Psoas muscle (tissue), 8 donors: ENCODE measurements at regions of chr3 and their contacts with region 1.

Region 1: DNA sequence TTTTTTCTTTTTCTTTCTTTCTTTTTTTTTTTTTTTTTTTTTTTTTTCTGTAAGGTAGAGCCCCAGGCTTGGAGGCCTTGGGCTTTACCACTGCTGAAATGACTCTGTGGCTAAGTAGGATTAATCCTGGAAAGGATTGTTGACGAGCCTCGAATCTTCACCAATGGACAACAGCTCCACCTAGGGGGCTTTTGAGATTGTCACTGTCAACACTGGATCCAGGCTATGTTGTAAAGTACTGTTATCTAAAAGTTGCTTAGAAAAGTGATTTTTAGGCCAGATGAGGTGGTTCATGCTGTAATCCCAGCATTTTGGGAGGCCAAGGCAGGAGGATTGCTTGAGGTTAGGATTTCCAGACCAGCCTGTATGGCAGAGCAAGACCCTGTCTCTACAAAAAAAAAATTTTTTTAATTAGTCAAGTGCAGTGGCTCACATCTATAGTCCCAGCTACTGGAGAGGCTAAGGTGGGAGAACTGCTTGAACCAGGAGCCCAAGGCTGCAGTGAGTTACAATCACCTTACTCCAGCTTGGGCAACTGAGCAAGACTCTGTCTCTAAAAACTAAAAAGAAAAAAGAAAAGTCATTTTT is 41.6 kb downstream of the KLHL18 start:
- DNase-seq: peak in 1 of 2 donors; percentile 23
- ATAC-seq: peak; percentile 94 to 98 (median 97)
- H3K4me3 ChIP-seq: no peak overlapping the region
- H3K27ac ChIP-seq: no peak overlapping the region
- H3K4me1 ChIP-seq: no peaks in the 10 kb centered on the region
- H3K27me3 ChIP-seq: no peaks in the 10 kb centered on the region
- CTCF ChIP-seq: peak; percentile 72

Region 2: GRCh38 chr3:46705022-46705530 is 619.3 kb before region 1 on chr3:
- intact Hi-C with region 1: loop called (anchors 10 kb)
- DNase-seq: peak; percentile 68 to 86
- ATAC-seq: peak; percentile 80 to 87 (median 84)
- H3K4me3 ChIP-seq: no peak overlapping the region
- H3K27ac ChIP-seq: no peak overlapping the region
- H3K4me1 ChIP-seq: peaks cover 35% of the 10 kb centered on the region
- H3K27me3 ChIP-seq: no peaks in the 10 kb centered on the region
- CTCF ChIP-seq: peak; percentile 98

Region 3: GRCh38 chr3:46923559-46924350 is 400.6 kb before region 1 on chr3:
- intact Hi-C with region 1: loop called in 1 of 2 experiments (anchors 10 kb)
- DNase-seq: peak in 1 of 2 donors; percentile 70
- ATAC-seq: peak in 2 of 4 donors; percentile 30 to 58
- H3K4me3 ChIP-seq: no peak overlapping the region
- H3K27ac ChIP-seq: no peak overlapping the region
- H3K4me1 ChIP-seq: peaks cover 53% of the 10 kb centered on the region
- H3K27me3 ChIP-seq: no peaks in the 10 kb centered on the region
- CTCF ChIP-seq: peak; percentile 66

Region 4: GRCh38 chr3:47113669-47114365 is 210.6 kb before region 1 on chr3:
- intact Hi-C with region 1: no loop called
- DNase-seq: no peak
- ATAC-seq: no peak
- H3K4me3 ChIP-seq: no peak overlapping the region
- H3K27ac ChIP-seq: no peak overlapping the region
- H3K4me1 ChIP-seq: no peaks in the 10 kb centered on the region
- H3K27me3 ChIP-seq: no peaks in the 10 kb centered on the region
- CTCF ChIP-seq: no peak

Region 5: DNA sequence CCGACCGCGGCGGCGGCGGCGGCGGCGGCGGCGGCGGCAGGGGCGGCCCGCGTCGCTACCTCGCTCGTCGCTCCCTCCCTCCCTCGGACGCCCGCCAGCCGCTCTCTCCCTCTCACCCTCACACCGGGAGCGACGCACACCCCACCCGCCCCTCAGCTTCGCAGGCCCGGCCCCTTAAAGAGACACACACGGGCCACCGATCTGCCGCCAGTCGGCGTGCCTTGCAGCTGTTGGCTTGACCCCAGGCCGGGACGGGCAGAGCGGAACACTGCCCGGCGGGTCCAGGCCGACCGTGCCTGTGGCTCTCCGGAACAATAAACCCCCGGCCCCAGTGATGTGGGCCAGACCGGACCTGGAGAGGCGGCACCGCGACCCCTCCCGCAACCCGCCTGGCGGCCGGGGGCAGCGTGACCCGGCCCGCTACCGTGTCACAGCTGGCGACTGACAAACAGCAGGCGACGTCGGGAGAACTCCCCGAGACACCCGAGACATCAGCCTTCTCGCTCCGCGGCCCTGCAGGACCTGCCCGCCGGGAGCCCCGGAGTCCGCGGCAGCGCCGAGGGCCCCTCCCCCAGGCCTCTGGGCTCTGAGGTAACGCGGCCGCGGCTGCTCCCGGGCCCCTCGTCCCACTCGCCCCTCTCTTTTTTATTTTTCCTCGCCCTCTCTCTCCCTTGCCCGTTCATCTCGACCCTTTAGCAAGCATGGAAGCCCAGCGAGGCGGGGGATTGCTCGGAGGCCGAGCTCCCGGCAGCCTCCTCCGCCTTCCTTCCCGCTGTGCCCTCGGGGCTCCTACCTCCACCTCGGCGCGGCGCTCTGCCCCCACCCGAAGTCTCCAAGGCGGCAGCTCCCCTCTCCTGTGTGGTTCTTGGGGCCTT is 160.1 kb before region 1 on chr3 and contains the start of gene SETD2:
- intact Hi-C with region 1: loop called in 1 of 2 experiments (anchors 10 kb)
- DNase-seq: peak; percentile 97 to 99
- ATAC-seq: peak; percentile 95 to 96 (median 96)
- H3K4me3 ChIP-seq: peak within 1 kb of the TSS; percentile 94
- H3K27ac ChIP-seq: peak within 1 kb of the TSS; percentile 96
- H3K4me1 ChIP-seq: peaks cover 45% of the 10 kb centered on the region
- H3K27me3 ChIP-seq: no peaks in the 10 kb centered on the region
- CTCF ChIP-seq: no peak
- total RNA-seq, gene SETD2: 33.7 to 38.1 (median 36.6) TPM

Region 6: DNA sequence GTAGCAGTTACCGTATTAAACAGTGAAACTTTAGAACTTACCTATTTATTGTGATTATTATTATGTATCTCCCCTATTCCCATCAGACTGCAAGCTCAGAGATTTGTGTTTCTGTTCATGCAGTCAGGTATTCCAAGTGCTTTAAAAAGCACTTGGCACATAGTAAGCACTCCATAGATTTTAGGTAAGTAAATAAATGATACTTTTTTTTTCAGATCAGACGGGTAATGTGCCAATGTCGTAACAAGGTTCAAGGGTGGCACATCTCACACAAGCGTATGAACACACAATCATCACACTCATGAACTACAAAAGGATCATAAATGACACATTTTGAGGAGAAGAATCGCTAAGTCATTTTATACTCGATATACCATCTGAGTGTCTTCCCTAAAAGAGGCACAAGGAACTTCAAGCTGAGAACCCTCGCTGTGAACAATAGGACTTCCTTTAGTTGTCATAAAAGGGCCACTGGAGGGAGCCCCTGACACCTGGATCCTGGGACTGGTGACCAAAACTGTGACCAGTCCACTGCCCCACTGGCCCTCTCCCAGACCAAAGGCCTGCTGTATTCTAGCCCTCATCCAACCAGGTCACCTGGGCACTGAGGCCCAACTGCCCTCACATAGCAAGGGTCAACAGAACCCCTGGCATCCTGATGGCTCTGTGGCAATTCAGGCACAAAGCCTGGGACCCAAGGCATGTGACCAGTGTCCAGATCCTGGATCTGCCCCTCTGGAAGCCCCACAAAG is 73.9 kb before region 1 on chr3:
- intact Hi-C with region 1: loop called (anchors 2 kb)
- DNase-seq: peak; percentile 33 to 66
- ATAC-seq: peak; percentile 84 to 96 (median 93)
- H3K4me3 ChIP-seq: no peak overlapping the region
- H3K27ac ChIP-seq: peak overlapping the region; percentile 30
- H3K4me1 ChIP-seq: peaks cover 5% of the 10 kb centered on the region
- H3K27me3 ChIP-seq: no peaks in the 10 kb centered on the region
- CTCF ChIP-seq: peak; percentile 60

Region 7: GRCh38 chr3:47282424-47283192 is 41.8 kb before region 1 on chr3 and contains the starts of genes KIF9 and KLHL18:
- intact Hi-C with region 1: loop called (anchors 2 to 5 kb)
- DNase-seq: peak; percentile 94 to 96
- ATAC-seq: peak; percentile 97 to 98 (median 98)
- H3K4me3 ChIP-seq: peak within 1 kb of the TSS; percentile 97
- H3K27ac ChIP-seq: peak within 1 kb of the TSS; percentile 97
- H3K4me1 ChIP-seq: peaks cover 34% of the 10 kb centered on the region
- H3K27me3 ChIP-seq: no peaks in the 10 kb centered on the region
- CTCF ChIP-seq: no peak
- total RNA-seq, gene KIF9: 3.5 to 5.9 (median 4.4) TPM
- total RNA-seq, gene KLHL18: 44.2 to 68.7 (median 53.8) TPM